CD4-positive, alpha-beta T cell (primary cell): ENCODE measurements at regions of chrX and their contacts with region 1.

Region 1: DNA sequence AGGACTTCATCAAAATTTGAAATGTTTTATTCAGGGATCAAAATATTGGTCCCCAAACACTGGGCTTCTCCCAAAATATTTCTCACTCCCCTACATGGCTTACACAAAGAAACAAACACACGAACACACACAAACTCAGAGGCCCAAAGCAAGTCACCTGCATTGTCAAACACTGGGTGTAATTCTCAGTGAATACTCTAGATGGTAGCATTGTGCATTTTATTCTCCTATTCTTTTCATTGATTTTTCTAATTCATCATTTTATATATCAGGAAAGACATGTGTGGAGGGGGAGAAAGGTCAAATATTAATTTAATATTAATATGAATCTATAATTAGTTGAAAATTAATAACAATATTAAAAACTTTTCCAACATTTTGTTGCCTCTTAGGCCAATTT is 72.3 kb upstream of the TNMD start:
- DNase-seq: peak in 3 of 14 experiments; percentile 12 to 19 (median 14)
- ATAC-seq: no peak
- H3K4me3 ChIP-seq: no peak overlapping the region
- H3K4me3 Mint-ChIP-seq: no peak overlapping the region
- H3K27ac ChIP-seq: no peak overlapping the region
- H3K27ac Mint-ChIP-seq: no peak overlapping the region
- H3K4me1 ChIP-seq: no peaks in the 10 kb centered on the region
- H3K4me1 Mint-ChIP-seq: no peaks in the 10 kb centered on the region
- H3K27me3 ChIP-seq: no peaks in the 10 kb centered on the region
- H3K27me3 Mint-ChIP-seq: no peaks in the 10 kb centered on the region
- CTCF ChIP-seq: peak; percentile 65

Region 2: DNA sequence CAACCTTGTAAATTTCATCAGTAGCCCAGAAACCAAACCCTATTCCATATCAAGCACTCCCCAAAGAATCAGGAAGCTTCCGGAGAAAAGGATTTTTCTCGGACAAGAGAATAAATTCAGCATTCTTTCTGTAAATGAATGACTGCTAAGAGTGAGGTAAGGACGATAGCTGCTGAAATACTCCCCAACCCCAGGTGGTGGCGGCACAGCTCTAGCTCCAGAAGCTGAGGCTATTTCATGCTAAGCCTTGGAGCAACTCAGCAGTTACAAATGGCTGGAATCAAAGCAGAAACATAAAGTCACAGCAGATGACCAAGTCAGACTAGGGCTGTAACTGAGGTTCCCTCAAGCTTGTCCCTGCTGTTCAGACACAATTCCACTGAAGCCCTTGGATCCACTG is 88.5 kb before region 1 on chrX:
- CTCF ChIA-PET with region 1: no interaction called
- POLR2A ChIA-PET with region 1: no interaction called
- intact Hi-C with region 1: no loop called
- DNase-seq: no peak
- ATAC-seq: no peak
- H3K4me3 ChIP-seq: no peak overlapping the region
- H3K4me3 Mint-ChIP-seq: no peak overlapping the region
- H3K27ac ChIP-seq: no peak overlapping the region
- H3K27ac Mint-ChIP-seq: no peak overlapping the region
- H3K4me1 ChIP-seq: no peaks in the 10 kb centered on the region
- H3K4me1 Mint-ChIP-seq: no peaks in the 10 kb centered on the region
- H3K27me3 ChIP-seq: no peaks in the 10 kb centered on the region
- H3K27me3 Mint-ChIP-seq: peaks cover 11% of the 10 kb centered on the region
- CTCF ChIP-seq: no peak

Region 3: DNA sequence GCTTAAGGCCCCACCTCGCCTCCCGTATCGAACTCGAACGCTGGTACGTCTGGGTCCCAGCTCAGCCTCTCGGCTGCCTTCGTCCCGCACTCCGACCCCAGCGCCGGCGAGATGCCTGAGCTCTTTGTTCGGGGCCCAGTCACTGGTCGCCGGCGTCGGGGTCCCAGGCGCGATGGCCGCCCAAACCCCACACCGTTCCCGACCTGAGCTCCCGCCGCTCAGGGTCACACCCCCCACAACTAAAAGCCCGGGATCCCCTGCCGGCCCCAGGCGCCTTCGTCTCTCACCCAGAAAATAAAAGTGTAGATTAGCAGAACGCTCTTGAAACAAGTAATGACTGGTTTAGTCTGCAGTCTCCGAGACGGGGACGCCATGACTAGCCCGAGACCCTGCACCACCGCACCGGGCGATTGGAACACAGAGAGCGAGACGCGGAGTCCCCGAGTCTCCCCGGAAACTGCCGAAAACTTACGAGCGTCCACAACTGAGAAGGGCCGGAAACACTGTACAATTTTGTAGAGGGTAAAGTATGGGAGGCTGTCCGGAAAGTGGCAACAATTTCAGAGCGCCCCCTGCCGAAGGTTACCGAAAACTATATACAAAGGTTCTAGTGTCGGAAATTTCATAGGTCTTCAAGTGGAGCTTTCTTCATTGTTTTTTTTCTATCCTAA is 124.0 kb after region 1 on chrX and contains the start of gene TSPAN6:
- CTCF ChIA-PET with region 1: no interaction called
- POLR2A ChIA-PET with region 1: no interaction called
- intact Hi-C with region 1: loop called in 1 of 2 experiments (anchors 10 kb)
- DNase-seq: peak; percentile 55 to 85 (median 72)
- ATAC-seq: peak; percentile 99
- H3K4me3 ChIP-seq: peak within 1 kb of the TSS; percentile 58
- H3K4me3 Mint-ChIP-seq: peak within 1 kb of the TSS; percentile 98
- H3K27ac ChIP-seq: no peak within 1 kb of the TSS
- H3K27ac Mint-ChIP-seq: peak within 1 kb of the TSS; percentile 72
- H3K4me1 ChIP-seq: no peaks in the 10 kb centered on the region
- H3K4me1 Mint-ChIP-seq: peaks cover 9% of the 10 kb centered on the region
- H3K27me3 ChIP-seq: peaks cover 0 to 5% of the 10 kb centered on the region in 2 experiments
- H3K27me3 Mint-ChIP-seq: peaks cover 16% of the 10 kb centered on the region
- CTCF ChIP-seq: peak; percentile 48
- total RNA-seq, gene TSPAN6: 1.1 to 1.9 TPM

Region 4: DNA sequence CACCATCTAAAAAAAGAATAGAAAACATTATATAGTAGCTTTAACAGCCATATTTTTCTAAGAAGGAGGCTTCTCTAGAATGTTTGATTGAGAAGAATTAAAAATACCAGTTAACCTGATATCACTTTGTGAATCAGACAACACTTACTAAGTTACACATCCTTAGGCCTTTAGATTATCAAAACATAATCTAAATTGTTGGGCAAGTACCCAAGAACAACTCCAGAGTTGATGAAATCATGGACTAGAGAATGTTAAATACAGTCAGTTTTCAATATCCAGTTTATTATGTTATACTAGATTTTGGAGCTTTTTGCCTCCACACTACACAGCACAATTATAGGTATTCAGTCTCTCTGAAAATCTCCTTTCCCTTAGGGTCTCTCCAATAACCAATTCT is 496.6 kb after region 1 on chrX:
- CTCF ChIA-PET with region 1: no interaction called
- POLR2A ChIA-PET with region 1: no interaction called
- intact Hi-C with region 1: no loop called
- DNase-seq: no peak
- ATAC-seq: no peak
- H3K4me3 ChIP-seq: no peak overlapping the region
- H3K4me3 Mint-ChIP-seq: no peak overlapping the region
- H3K27ac ChIP-seq: no peak overlapping the region
- H3K27ac Mint-ChIP-seq: no peak overlapping the region
- H3K4me1 ChIP-seq: no peaks in the 10 kb centered on the region
- H3K4me1 Mint-ChIP-seq: no peaks in the 10 kb centered on the region
- H3K27me3 ChIP-seq: no peaks in the 10 kb centered on the region
- H3K27me3 Mint-ChIP-seq: no peaks in the 10 kb centered on the region
- CTCF ChIP-seq: no peak